GM18951 (cell line): ENCODE measurements at regions of chr5 and their contacts with region 1.

Region 1: DNA sequence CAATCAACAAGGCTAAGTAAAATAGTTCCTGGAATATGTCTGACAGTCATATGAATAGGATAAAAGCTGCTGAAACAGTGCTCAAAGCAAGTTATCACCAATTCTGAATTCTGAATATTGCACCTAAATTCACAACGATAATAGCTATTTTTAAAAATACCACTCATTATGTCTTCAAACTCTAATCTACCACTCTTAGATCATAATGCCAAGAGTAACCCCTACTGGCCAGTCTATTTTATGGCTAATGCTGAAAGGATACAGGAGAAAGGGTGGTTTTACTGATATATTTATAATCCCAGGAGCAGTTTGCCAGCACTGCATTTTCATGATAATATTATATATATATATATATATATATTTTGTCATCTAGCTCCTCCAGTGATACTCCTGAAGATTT is 232.8 kb downstream of the PDE4D start:
- POLR2A ChIP-seq: no peak

Region 2: GRCh38 chr5:59506285-59506877 is 154.4 kb before region 1 on chr5:
- in situ Hi-C with region 1: loop called (anchors 10 kb)
- POLR2A ChIP-seq: no peak

Region 3: GRCh38 chr5:59575648-59576445 is 84.9 kb before region 1 on chr5:
- in situ Hi-C with region 1: no loop called
- POLR2A ChIP-seq: no peak